T-cell (primary cell): ENCODE measurements at regions of chr17 and their contacts with region 1.

Region 1: GRCh38 chr17:4304417-4305027 is 40.7 kb upstream of the ANKFY1 start:
- DNase-seq: peak in 30 of 35 experiments; percentile 10 to 81 (median 45)
- ATAC-seq: peak; percentile 71 to 82 (median 78)
- H3K4me3 ChIP-seq: no peak overlapping the region
- H3K4me3 Mint-ChIP-seq: no peak overlapping the region
- H3K27ac ChIP-seq: no peak overlapping the region
- H3K27ac Mint-ChIP-seq: no peak overlapping the region
- H3K4me1 ChIP-seq: peaks cover 0 to 7% of the 10 kb centered on the region in 2 experiments
- H3K4me1 Mint-ChIP-seq: peaks cover 21 to 35% (median 22%) of the 10 kb centered on the region in 3 donors
- H3K27me3 ChIP-seq: no peaks in the 10 kb centered on the region
- H3K27me3 Mint-ChIP-seq: no peaks in the 10 kb centered on the region

Region 2: DNA sequence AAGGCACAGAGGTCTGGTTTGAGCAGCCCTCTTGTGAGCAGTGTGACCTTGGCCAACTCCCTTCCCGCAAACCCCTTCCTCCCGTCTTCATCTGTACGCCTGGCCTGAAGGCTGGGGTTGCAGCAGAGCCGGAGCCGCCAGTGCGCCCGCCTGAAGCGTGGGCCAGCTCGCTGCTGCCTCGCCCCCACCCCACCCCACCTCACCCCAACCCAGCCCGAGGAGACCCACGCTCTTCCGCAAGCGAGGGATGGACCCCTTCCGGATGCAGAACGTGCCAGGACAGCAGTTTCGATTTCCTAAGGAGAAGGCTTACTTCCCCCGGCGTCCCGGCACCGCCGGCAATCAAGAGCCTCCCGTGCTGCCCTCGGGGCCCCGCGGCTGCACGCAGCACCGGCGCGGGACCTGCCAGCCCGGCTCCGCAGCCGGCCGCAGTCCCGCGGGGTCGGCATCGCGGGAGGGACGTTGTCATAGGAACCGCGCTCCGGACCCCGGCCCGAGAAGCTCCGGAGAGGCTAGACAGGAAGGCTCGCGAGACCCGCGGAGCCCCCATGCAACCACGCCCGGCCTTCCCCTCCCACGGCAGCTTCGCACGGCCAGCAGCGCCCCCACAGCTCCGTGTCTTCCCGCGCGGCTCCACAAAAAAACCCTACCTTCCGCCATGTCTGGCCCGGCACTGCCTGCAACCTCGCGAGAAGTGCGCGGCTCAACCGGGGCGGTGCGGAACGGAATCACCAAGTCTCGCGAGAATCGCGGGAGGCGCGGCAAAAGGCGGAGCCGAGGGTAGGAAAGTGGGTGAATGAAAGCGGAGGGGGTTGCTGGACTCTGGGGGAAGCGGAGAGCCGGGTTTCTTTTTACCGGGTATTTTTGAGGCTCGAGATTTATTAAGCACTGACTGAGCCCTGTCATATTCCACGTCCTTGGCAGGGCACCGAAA is 41.0 kb before region 1 on chr17 and contains the start of gene ANKFY1:
- CTCF ChIA-PET with region 1: no interaction called
- POLR2A ChIA-PET with region 1: no interaction called
- DNase-seq: peak; percentile 92 to 99 (median 97)
- ATAC-seq: peak; percentile 95 to 99 (median 98)
- H3K4me3 ChIP-seq: peak within 1 kb of the TSS; percentile 67 to 88
- H3K4me3 Mint-ChIP-seq: peak within 1 kb of the TSS; percentile 92 to 97 (median 96)
- H3K27ac ChIP-seq: peak within 1 kb of the TSS; percentile 70
- H3K27ac Mint-ChIP-seq: peak within 1 kb of the TSS; percentile 91 to 94
- H3K4me1 ChIP-seq: peaks cover 6 to 28% of the 10 kb centered on the region in 2 experiments
- H3K4me1 Mint-ChIP-seq: peaks cover 35 to 45% (median 42%) of the 10 kb centered on the region in 3 donors
- H3K27me3 ChIP-seq: no peaks in the 10 kb centered on the region
- H3K27me3 Mint-ChIP-seq: no peaks in the 10 kb centered on the region
- total RNA-seq, gene ANKFY1: 58.0 to 69.6 (median 67.0) TPM

Region 3: GRCh38 chr17:4365103-4365627 is 60.6 kb after region 1 on chr17:
- CTCF ChIA-PET with region 1: no interaction called
- POLR2A ChIA-PET with region 1: no interaction called
- DNase-seq: peak; percentile 76 to 93 (median 82)
- ATAC-seq: peak; percentile 53 to 58 (median 57)
- H3K4me3 ChIP-seq: peak overlapping the region; percentile 62 to 74
- H3K4me3 Mint-ChIP-seq: peak overlapping the region; percentile 91 to 97 (median 91)
- H3K27ac ChIP-seq: peak overlapping the region; percentile 1
- H3K27ac Mint-ChIP-seq: peak overlapping the region; percentile 95 to 97
- H3K4me1 ChIP-seq: peaks cover 12 to 35% of the 10 kb centered on the region in 2 experiments
- H3K4me1 Mint-ChIP-seq: peaks cover 37 to 44% (median 40%) of the 10 kb centered on the region in 3 donors
- H3K27me3 ChIP-seq: no peaks in the 10 kb centered on the region
- H3K27me3 Mint-ChIP-seq: no peaks in the 10 kb centered on the region

Region 4: DNA sequence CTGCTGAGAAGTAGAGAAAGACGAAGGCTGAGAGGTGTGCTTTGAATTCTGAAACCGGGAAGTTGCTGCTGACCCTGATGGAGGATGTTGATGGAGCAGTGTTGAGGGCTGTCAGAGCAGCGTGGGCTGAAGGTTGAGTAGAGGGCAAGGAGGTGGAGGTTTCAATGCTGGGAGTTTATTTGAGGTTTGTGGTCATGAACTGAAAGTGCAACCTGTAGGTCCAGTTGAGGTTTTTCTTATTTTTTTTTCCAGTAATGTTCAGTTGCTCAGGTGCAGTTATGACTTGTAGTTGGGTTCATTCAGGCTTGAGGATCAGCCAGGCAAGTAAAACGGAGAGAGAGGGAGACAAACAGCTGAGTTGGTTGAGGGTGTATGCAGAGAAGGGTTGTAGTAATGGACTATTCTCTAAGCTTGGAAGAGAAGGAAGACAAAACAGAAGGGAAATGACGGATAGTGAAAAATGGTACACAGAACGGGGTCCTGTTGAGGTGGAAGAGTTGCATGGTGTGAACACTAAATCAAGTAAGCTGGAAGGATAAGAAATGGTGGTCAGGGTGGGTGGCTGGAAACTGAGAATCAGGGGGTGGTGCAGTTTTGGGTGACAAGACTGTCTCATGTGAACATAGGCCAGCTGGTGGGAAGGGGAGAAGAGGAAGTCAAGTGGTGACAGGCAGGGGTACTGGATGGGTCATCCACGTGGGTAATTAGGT is 70.7 kb after region 1 on chr17:
- CTCF ChIA-PET with region 1: interaction called in 1 of 2 experiments, 10 read pairs
- POLR2A ChIA-PET with region 1: no interaction called
- DNase-seq: peak in 7 of 35 experiments; percentile 4 to 54 (median 12)
- ATAC-seq: peak; percentile 68 to 79 (median 76)
- H3K4me3 ChIP-seq: no peak overlapping the region
- H3K4me3 Mint-ChIP-seq: peak overlapping the region; percentile 19 to 44 (median 25)
- H3K27ac ChIP-seq: peak overlapping the region; percentile 61
- H3K27ac Mint-ChIP-seq: peak overlapping the region; percentile 87 to 88
- H3K4me1 ChIP-seq: peaks cover 4 to 18% of the 10 kb centered on the region in 2 experiments
- H3K4me1 Mint-ChIP-seq: peaks cover 12 to 26% (median 13%) of the 10 kb centered on the region in 3 donors
- H3K27me3 ChIP-seq: no peaks in the 10 kb centered on the region
- H3K27me3 Mint-ChIP-seq: no peaks in the 10 kb centered on the region

Region 5: DNA sequence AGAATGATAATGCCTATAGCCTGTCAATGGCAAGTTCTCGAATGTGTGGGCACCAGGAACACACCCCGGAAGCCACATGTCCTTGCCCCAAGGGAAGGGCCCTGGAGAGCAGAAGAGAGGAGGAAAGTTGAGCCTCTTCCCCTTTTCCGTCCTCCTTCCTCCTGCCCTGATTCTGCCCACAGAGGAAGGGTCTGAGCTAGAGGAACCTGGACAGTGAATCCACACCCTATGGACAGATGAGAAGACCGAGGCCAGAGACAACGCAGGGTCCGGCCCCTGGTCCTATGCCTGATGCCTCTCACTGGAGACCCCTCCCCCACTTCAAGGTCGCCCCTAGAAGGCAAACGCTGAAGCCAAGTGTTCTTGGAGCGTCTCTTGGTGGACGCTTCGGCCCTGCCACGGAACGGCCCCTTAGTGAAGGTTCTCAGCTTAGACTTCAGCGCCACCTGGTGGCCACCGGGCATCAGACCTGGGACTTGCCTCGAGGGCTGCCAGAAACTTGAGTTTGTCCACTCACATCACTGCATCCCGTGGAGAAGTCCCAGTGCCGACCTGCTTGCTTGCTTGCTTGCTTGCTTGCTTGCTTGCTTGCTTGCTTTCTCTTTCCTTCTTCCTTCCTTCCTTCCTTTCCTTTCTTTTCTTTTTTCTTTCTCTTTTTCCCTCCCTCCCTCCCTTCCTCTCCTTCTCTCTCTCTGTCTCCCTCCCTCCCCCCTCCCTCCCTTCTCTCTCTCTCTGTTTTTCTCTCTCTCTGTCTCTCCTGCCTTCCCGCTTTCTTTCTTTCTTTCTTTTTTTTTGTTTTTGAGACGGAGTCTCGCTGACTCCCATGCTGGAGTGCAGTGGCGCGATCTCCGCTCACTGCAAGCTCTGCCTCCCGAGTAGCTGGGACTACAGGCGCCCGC is 108.7 kb after region 1 on chr17:
- CTCF ChIA-PET with region 1: no interaction called
- POLR2A ChIA-PET with region 1: no interaction called
- DNase-seq: peak; percentile 60 to 93 (median 86)
- ATAC-seq: peak; percentile 79 to 99 (median 94)
- H3K4me3 ChIP-seq: peak overlapping the region in 1 of 2 donors; percentile 11
- H3K4me3 Mint-ChIP-seq: peak overlapping the region; percentile 28 to 68 (median 68)
- H3K27ac ChIP-seq: no peak overlapping the region
- H3K27ac Mint-ChIP-seq: peak overlapping the region; percentile 28 to 55
- H3K4me1 ChIP-seq: peaks cover 0 to 8% of the 10 kb centered on the region in 2 experiments
- H3K4me1 Mint-ChIP-seq: peaks cover 4 to 7% (median 5%) of the 10 kb centered on the region in 3 donors
- H3K27me3 ChIP-seq: no peaks in the 10 kb centered on the region
- H3K27me3 Mint-ChIP-seq: no peaks in the 10 kb centered on the region

Region 6: GRCh38 chr17:4786106-4786511 is 481.6 kb after region 1 on chr17 and contains the start of gene VMO1:
- CTCF ChIA-PET with region 1: no interaction called
- POLR2A ChIA-PET with region 1: no interaction called
- DNase-seq: peak in 1 of 35 experiments; percentile 19
- ATAC-seq: no peak
- H3K4me3 ChIP-seq: no peak within 1 kb of the TSS
- H3K4me3 Mint-ChIP-seq: peak within 1 kb of the TSS in 1 of 3 donors; percentile 59
- H3K27ac ChIP-seq: no peak within 1 kb of the TSS
- H3K27ac Mint-ChIP-seq: no peak within 1 kb of the TSS
- H3K4me1 ChIP-seq: peaks cover 8 to 36% of the 10 kb centered on the region in 2 experiments
- H3K4me1 Mint-ChIP-seq: peaks cover 24 to 32% (median 27%) of the 10 kb centered on the region in 3 donors
- H3K27me3 ChIP-seq: peaks cover 13 to 80% of the 10 kb centered on the region in 2 experiments
- H3K27me3 Mint-ChIP-seq: peaks cover 35 to 62% of the 10 kb centered on the region in 2 donors
- total RNA-seq, gene VMO1: 0.38 to 0.82 (median 0.59) TPM in 4 of 5 donors, not detected in the other